Mucosa of descending colon (tissue), 3 donors: ENCODE measurements at regions of chr17 and their contacts with region 1.

Region 1: DNA sequence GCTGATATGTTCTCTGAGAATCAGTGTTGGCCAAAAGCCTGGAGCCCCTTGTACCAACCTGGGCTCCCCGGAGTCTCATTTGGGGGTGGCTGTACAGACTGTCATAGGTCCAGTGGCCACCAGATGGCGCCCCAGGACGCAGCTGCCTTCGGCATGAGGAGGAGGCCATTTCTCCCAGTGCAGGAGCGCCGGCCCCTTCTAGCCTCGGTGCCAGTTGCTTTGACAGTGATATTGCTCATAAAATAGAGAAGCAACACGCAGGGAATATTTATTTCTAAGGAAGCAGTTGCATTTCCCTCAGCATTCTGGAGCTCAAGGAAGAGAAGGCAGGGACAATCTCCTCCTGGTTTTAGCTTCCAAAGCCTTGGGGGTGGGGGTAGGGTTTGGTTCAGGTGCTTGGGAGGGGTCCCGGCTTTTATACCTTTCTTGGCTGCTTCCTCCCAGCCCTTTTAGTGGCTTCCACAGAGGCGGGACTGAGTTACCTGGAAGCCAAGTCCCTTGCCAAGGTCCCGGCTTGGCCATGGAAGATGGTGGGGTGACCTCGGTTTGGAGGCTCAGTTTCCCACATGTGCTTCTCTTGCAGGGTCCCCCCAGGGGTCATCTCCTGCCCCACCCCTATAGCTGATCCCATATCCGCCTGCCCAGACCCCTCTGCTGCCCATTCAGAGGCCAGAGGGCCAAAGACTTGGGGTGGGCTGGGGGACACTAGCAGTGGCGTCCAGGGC is 117.8 kb upstream of the CDC42EP4 start:
- DNase-seq: peak; percentile 88 to 91 (median 91)
- ATAC-seq: peak; percentile 95
- H3K4me3 ChIP-seq: no peak overlapping the region
- H3K4me1 ChIP-seq: peaks cover 19% of the 10 kb centered on the region
- CTCF ChIP-seq: peak; percentile 84

Region 2: GRCh38 chr17:73705594-73705993 is 276.0 kb after region 1 on chr17:
- intact Hi-C with region 1: loop called in 1 of 2 experiments (anchors 5 kb)
- DNase-seq: peak in 1 of 3 donors; percentile 29
- ATAC-seq: peak; percentile 50
- H3K4me3 ChIP-seq: no peak overlapping the region
- H3K4me1 ChIP-seq: no peaks in the 10 kb centered on the region
- CTCF ChIP-seq: no peak

Region 3: DNA sequence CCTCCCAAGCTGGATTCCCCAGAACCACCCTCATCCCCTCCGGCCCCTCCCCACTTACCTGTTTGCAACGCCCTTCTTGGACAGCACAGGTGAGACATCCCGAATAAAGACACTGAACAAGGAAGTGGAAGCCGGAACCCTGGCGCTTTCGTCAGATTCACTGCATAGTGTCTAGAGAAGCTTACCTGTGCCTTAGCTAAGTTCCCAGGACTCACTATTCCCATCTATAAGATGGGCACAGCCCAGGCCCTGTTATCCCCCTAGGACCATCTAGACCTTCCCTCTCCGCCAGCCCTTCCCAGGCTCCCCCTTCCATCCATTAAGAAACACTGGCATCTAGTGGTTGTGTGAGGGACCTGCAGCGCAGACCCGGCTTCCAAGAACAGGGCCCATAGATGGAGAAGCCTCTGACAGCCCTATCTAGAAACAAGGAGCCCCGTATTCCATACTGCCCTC is 747.0 kb after region 1 on chr17:
- intact Hi-C with region 1: loop called (anchors 5 to 10 kb)
- DNase-seq: peak in 2 of 3 donors; percentile 78 to 79
- ATAC-seq: peak; percentile 86
- H3K4me3 ChIP-seq: no peak overlapping the region
- H3K4me1 ChIP-seq: no peaks in the 10 kb centered on the region
- CTCF ChIP-seq: peak; percentile 58